ENCODE measurements at regions of chr4 and their contacts with region 1.

Region 1: GRCh38 chr4:82181789-82182188 is 192.0 kb downstream of the HNRNPD start:
- DNase-seq: no peak
- H3K4me3 ChIP-seq: no peak overlapping the region
- H3K27ac ChIP-seq: no peak overlapping the region
- H3K4me1 ChIP-seq: no peaks in the 10 kb centered on the region
- CTCF ChIP-seq: no peak

Region 2: DNA sequence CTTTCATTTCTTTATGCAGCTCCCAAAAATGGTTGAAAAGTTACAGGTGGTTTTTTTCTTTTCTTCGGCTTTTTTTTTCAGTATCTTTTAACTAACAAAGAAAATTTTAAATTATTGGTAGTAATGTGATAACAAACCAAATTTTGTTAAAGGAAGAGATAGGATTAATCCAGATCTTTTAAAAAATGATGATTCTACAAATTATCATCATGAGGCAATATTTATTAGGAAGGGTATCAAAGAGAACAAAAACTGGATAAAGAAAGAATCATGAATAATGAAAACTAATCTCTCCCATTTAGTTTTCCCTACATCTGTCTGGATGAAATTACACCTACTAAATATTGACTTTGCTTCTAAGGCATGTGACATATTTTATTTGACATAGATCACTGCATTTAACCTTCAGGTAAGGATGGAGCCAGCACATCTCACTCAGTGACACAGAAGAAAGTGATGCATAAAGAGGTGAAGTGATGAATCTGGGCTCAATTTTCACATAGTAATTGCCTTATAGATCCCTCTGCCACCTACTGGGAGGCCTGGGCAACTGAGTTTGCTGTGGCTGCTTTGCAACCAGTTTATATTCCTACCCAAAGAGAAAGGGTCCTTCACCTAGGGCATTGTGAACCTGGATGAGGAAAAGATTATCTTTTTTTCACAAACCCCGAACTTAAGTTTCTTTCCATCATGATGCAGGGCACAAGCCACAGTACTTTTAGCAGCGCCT is 36.4 kb after region 1 on chr4:
- CTCF ChIA-PET with region 1: no interaction called
- POLR2A ChIA-PET with region 1: no interaction called
- intact Hi-C with region 1: loop called (anchors 2 kb)
- DNase-seq: peak; percentile 28
- H3K4me3 ChIP-seq: no peak overlapping the region
- H3K27ac ChIP-seq: no peak overlapping the region
- H3K4me1 ChIP-seq: no peaks in the 10 kb centered on the region
- CTCF ChIP-seq: peak; percentile 75

Measured in OCI-LY7 (cell line).